ENCODE measurements at regions of chr3 and their contacts with region 1.

Region 1: DNA sequence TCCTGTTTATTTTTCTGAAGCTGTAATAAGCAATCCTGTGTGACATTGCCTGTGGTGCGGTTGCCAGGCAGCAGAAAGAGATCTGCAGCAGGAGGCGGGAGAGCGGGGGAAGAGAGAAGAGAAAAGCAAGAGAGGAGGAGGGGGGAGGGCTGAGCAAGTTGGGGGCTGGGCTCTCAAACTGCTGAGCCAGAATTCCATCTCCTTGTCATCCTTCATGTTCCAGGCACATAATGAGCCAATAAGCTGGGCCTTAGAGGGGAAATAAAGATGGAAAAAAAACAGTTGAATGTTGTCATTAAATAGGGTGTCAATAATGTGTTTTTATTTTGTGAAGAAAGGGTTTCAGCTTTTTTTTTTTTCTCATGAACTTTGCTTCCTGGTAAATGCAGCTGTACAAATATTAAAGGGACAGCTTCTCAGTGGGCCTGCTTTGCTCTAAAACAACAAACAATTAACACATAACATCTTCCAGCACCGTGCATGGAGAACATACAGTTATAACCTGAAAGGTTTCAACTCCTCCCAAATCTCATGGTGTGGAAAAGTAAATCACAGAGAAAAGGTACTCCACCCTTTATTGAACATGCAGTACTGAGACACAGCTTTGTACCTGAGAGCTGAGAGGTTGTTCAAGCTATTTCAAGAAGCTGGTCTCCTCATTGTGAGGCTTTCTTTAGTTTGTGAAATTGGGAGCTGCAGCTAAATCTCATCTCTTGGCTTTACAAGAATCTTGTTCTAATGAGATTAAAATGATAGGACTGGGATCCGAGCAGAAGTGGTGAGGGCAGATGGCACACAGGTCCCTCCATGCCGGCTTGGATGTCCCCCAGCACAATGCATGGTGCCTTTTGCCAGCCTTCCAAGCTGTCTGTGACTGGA is 451.1 kb upstream of the KCNMB2 start:
- DNase-seq: peak; percentile 84 to 91 (median 86)
- ATAC-seq: peak; percentile 92 to 98 (median 95)
- H3K4me3 ChIP-seq: no peak overlapping the region
- H3K27ac ChIP-seq: peak overlapping the region in 11 of 12 donors; percentile 39 to 90 (median 77)
- H3K4me1 ChIP-seq: peaks cover 7 to 49% (median 34%) of the 10 kb centered on the region in 12 donors
- H3K27me3 ChIP-seq: no peaks in the 10 kb centered on the region
- CTCF ChIP-seq: no peak
- POLR2A ChIP-seq: no peak

Region 2: DNA sequence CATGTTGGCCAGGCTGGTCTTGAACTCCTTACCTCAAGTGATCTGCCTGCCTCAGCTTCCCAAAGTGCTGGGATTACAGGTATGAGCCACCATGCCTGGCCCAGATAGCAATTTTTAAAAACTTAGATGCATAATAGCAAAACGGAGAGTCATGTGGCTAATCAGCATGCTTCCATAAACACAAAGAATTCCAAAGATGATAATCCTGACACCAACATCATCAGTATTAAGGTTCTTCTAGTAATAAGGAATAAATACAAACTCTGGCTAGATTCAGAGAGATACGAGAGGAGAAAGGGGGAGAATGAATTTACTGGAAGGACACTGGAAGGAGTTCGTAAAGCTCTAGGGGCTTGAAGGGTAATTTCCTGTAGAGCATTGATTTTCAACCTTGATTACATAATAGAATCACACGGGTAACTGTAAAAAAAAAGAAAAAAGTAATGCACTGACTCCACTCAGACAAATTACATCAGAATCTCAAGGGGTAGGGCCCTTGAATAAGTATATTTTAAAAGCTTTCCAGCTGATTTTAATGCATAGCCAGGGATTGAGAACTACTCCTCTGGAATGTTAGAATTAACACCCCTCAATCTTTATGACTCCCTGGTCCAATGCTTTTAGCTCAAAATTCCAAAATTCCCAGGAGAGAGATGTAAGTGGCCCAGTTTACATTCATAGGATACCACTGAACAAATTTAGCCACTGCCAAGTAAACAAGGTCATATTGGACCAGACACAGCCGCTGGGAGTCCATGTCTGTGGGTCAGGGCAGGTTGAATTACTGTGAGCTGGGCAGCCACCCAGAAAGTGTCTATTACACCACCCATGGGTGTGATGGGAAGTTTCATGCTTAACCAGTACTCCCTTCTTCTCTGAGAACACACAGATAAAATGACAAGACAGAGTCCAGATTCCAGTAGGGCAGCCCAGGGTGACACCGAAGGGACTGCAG is 1131.8 kb before region 1 on chr3:
- intact Hi-C with region 1: loop called in 1 of 10 experiments (anchors 10 kb)
- DNase-seq: peak; percentile 72 to 87 (median 79)
- ATAC-seq: peak; percentile 92 to 96 (median 96)
- H3K4me3 ChIP-seq: no peak overlapping the region
- H3K27ac ChIP-seq: peak overlapping the region in 9 of 12 donors; percentile 7 to 81 (median 20)
- H3K4me1 ChIP-seq: peaks cover 0 to 36% (median 7%) of the 10 kb centered on the region in 12 donors
- H3K27me3 ChIP-seq: no peaks in the 10 kb centered on the region
- CTCF ChIP-seq: no peak
- POLR2A ChIP-seq: no peak

Region 3: GRCh38 chr3:177753451-177754155 is 331.6 kb before region 1 on chr3:
- intact Hi-C with region 1: loop called in 1 of 10 experiments (anchors 10 kb)
- DNase-seq: peak; percentile 73 to 86 (median 74)
- ATAC-seq: peak; percentile 88 to 97 (median 96)
- H3K4me3 ChIP-seq: no peak overlapping the region
- H3K27ac ChIP-seq: peak overlapping the region; percentile 28 to 71 (median 43)
- H3K4me1 ChIP-seq: peaks cover 3 to 36% (median 25%) of the 10 kb centered on the region in 12 donors
- H3K27me3 ChIP-seq: no peaks in the 10 kb centered on the region
- CTCF ChIP-seq: no peak
- POLR2A ChIP-seq: no peak

Region 4: DNA sequence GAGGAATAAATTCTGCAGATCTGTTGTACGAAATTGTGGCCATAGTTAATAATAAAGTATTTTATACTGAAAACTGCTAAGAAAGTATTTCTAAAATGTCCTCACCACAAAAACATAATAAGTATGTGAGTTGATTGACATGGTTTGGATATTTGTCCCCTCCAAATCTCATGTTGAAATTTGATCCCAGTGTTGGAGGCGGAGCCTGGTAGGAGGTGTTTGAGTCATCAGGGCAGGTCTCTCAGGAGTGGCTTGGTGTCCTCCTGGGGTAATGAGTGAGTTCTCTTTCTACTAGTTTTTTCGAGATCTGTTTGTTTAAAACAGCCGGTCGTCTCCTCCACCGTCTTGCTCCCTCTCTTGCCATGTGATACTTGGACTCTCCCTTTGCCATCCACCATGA is 27.0 kb after region 1 on chr3:
- intact Hi-C with region 1: no loop called
- DNase-seq: no peak
- ATAC-seq: no peak
- H3K4me3 ChIP-seq: no peak overlapping the region
- H3K27ac ChIP-seq: no peak overlapping the region
- H3K4me1 ChIP-seq: no peaks in the 10 kb centered on the region
- H3K27me3 ChIP-seq: no peaks in the 10 kb centered on the region
- CTCF ChIP-seq: no peak
- POLR2A ChIP-seq: no peak

Region 5: DNA sequence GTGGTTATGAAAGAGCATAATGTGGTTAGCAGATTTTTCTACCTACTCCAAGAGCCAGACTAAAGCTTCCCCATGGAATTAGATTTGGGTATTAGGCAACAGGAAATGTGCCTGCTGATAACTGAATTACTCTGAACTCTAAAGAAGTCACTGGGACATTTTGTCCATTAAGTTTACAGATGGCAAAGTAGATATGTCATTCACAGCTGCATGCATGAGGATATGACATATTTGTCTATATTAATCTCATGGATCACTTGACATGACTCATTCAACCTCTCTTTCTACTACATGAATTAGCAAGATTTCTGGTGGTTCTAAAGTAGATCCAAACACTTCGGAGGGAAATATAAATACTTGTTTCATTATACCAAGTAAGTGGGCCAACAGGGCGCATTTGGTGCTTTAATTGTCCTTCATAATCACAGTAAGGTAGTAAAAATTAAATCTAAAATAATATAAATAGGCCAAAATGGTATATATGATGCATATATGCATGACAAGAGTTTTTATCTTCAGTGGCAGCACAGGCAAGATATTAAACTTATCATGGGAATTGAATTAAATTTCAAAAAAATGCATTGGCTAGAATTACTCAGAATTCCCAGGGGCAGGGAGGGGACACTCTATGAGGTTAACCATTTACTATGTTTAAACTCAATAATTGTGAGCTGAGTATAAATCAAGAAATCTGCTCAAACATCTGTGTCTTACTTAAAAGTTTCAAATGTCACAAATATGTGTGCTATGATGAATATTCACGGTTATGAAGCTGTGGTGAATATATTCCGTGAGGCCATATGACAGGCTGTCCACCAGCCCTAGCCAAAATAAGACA is 85.7 kb after region 1 on chr3:
- intact Hi-C with region 1: loop called in 1 of 10 experiments (anchors 5 kb)
- DNase-seq: peak in 1 of 5 donors; percentile 12
- ATAC-seq: peak; percentile 86 to 95 (median 94)
- H3K4me3 ChIP-seq: no peak overlapping the region
- H3K27ac ChIP-seq: peak overlapping the region in 10 of 12 donors; percentile 12 to 78 (median 40)
- H3K4me1 ChIP-seq: peaks cover 3 to 24% (median 13%) of the 10 kb centered on the region in 12 donors
- H3K27me3 ChIP-seq: no peaks in the 10 kb centered on the region
- CTCF ChIP-seq: no peak
- POLR2A ChIP-seq: no peak